Endothelial cell of umbilical vein (primary cell): ENCODE measurements at regions of chr9 and their contacts with region 1.

Region 1: GRCh38 chr9:87148331-87149104 is 201.2 kb upstream of the GAS1 start:
- DNase-seq: peak; percentile 69
- H3K4me3 ChIP-seq: peak overlapping the region in 2 of 3 experiments; percentile 6 to 9
- H3K27ac ChIP-seq: no peak overlapping the region
- H3K4me1 ChIP-seq: peaks cover 3% of the 10 kb centered on the region
- H3K27me3 ChIP-seq: no peaks in the 10 kb centered on the region
- CTCF ChIP-seq: no peak
- POLR2A ChIP-seq: no peak

Region 2: DNA sequence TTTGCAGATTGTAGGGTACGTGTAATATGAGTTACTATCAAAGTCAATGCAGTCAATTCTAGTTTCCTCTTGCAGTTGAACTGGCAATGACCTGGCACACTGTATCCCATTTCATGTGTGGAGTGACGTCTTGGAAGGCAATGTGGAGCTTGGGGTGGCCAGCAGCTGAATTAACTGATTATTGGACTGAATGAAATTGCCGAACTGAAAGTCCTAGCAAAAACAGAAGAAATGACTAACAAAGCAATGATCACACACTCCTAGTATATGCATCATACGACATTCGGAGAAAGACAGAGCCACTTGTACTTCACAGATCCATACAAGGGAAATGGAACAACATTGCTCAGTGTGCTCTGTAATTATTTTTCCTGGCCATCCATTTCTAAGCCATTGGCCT is 90.0 kb after region 1 on chr9:
- CTCF ChIA-PET with region 1: no interaction called
- POLR2A ChIA-PET with region 1: no interaction called
- dilution Hi-C with region 1: no loop called
- intact Hi-C with region 1: no loop called
- DNase-seq: no peak
- H3K4me3 ChIP-seq: no peak overlapping the region
- H3K27ac ChIP-seq: no peak overlapping the region
- H3K4me1 ChIP-seq: no peaks in the 10 kb centered on the region
- H3K27me3 ChIP-seq: no peaks in the 10 kb centered on the region
- CTCF ChIP-seq: no peak
- POLR2A ChIP-seq: no peak

Region 3: DNA sequence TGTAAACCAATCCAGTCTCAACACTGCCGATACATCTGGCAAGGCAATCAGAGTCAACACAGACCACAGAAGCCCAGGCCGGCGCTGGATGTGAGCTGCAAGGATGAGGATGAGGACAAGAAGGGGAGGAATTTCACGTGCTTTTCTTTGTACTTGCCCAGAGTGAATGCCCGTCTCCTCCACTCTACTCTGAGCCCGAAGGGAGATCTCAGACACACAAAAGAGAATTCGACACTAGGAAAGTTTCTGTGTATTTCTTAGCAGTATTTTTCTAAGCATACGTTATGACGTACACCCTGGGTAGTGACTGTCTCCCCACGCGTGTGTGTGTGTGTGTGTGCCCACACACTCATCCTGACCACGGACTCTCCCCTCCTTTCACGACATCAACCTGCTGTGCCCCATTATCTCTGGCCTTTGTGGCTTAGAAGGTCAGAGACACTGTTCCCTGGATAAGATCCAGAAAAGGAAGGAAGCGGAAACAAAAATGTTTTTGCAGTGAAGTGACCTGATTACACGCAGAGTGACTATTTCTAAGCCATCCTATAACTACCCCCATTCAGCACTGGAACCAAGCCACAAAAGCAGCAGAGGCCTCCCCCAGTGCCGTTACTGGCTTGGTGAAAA is 121.8 kb after region 1 on chr9:
- CTCF ChIA-PET with region 1: no interaction called
- POLR2A ChIA-PET with region 1: no interaction called
- dilution Hi-C with region 1: no loop called
- intact Hi-C with region 1: loop called (anchors 1 kb)
- DNase-seq: peak; percentile 70
- H3K4me3 ChIP-seq: no peak overlapping the region
- H3K27ac ChIP-seq: no peak overlapping the region
- H3K4me1 ChIP-seq: peaks cover 11% of the 10 kb centered on the region
- H3K27me3 ChIP-seq: no peaks in the 10 kb centered on the region
- CTCF ChIP-seq: no peak
- POLR2A ChIP-seq: no peak